ENCODE measurements at regions of chr6 and their contacts with region 1.

Region 1: DNA sequence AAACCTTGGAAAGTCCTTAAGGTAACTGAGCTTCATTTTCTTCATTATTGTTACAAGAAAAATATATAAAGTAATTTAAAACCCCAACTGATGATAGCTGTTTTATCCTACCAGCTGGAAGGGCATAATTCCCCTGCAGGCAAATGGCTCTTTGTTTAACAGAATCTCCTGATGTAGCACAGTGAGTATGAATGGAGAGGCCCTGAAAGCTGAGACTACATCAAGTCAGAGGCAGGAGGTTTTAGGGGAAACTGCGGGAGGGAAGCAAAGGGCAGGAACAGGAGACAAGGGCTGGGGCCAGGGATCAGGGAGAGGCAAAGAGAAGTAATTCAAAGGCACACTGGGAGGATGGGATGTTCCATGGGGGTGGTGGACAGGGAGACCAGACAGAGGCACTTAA is 119.0 kb upstream of the LRFN2 start:
- DNase-seq: no peak
- H3K4me3 ChIP-seq: no peak overlapping the region
- H3K4me3 Mint-ChIP-seq: no peak overlapping the region
- H3K27ac Mint-ChIP-seq: no peak overlapping the region
- H3K4me1 ChIP-seq: no peaks in the 10 kb centered on the region
- H3K4me1 Mint-ChIP-seq: peaks cover 7% of the 10 kb centered on the region
- H3K27me3 ChIP-seq: no peaks in the 10 kb centered on the region
- H3K27me3 Mint-ChIP-seq: peaks cover 8% of the 10 kb centered on the region
- CTCF ChIP-seq: no peak

Region 2: DNA sequence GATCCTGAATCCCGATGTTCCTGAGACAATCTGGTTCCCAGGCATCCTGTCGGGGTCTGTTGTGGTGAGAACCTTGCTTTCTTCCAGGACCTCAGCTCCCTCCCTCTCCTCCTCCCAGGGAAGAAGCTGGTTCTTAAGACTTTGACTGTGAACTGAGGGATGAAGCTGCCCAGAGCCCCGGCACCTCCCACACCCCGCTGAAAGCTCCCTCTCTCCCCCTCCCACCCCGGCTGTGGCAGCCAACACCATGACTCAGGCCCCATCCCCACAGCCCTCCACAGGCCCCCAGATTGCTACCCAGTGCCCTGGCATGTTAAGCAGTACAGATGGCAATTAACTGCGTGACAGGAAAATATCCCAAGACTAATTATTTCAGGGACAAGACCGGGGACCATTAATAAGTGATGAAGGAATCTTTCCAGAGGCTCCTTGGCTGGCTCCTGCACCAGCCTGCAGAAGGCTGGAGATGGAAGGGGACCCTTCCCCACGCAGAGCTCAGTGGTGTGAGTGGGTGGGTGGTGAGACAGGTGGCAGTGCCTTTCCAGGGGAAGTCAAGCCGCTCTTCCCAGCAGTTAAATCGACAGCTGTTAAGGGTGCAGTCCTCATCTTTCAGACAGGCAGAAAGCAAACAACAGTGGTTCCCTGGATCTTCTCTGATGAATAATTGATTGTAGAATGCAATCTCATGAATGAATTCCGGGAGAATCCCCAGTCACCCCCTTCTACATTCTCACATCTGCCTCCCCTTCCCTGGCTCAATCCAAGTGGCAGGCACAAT is 356.9 kb before region 1 on chr6:
- CTCF ChIA-PET with region 1: no interaction called
- POLR2A ChIA-PET with region 1: no interaction called
- intact Hi-C with region 1: loop called (anchors 10 kb)
- DNase-seq: no peak
- H3K4me3 ChIP-seq: no peak overlapping the region
- H3K4me3 Mint-ChIP-seq: no peak overlapping the region
- H3K27ac Mint-ChIP-seq: no peak overlapping the region
- H3K4me1 ChIP-seq: no peaks in the 10 kb centered on the region
- H3K4me1 Mint-ChIP-seq: no peaks in the 10 kb centered on the region
- H3K27me3 ChIP-seq: no peaks in the 10 kb centered on the region; the same call in 1 of the 2 replicates
- H3K27me3 Mint-ChIP-seq: no peaks in the 10 kb centered on the region
- CTCF ChIP-seq: no peak